Head of caudate nucleus (tissue), 42 donors: ENCODE measurements at regions of chr17 and their contacts with region 1.

Region 1: DNA sequence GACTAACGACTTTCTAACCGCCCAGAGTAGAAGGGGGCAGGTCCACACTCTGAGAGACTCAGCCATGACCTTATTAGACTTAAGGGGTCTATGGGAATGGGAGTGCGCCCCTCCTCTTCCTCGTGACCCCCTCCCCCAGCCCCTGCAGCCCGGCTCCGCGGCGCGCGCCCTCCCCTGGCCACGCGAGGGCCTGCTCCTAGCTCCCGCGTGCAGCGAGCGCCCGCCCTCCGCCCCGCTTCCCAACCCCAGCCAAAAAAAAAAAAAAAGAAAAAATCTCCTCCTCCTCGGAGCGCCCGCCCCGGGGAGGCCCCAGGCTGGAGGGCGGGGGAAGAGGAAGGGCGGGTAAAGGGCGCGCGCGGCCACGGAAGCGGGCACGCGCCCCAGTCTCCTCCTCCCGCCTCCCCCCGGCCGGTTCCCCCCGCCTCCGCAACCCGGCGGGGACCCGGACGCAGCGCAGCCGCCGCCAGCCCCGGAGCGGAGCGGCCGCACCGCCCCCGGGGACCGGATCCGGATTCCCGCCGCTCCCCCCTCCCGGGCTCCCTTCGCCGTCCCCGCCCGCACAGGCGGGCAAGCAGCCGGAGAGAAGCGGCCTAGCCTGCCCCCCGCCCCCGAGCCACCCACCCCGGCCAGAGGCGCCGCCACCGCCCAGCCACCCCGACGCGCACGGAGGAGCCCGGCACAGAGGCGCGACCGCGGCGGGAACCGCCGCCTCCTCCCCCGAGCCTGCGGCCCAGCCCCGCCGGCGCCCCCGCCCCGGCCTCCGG is 949 bp downstream of the UBTF start:
- DNase-seq: peak; percentile 57 to 95 (median 88)

Region 2: DNA sequence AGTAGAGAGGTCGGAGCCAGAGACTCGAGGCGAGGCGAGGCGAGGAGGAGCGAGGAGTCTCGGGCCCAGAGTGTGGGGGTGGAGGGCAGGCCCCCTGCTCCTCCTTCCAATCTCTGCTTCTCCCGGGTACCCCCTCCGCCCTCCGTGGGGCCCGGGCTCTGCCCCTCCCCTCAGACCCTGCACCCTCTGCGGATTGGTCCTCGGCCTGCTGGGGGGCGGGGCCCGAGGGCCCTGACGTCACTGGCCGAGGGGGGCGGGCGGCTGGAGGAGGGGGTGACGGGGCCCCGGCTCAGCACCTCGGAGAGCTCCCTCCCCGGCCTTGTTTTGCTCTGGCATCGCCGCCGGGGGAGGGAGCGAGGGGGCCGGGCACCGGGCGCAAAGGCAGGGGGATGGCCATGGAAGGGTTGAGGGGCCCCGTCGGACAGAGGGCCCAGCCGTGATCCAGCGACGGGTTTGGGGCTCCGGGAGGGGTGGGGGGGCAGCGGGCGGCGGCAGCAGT is 89.8 kb after region 1 on chr17 and contains the start of gene RUNDC3A:
- intact Hi-C with region 1: loop called (anchors 2 kb)
- DNase-seq: peak; percentile 85 to 98 (median 96)

Region 3: GRCh38 chr17:44326867-44327444 is 108.4 kb after region 1 on chr17:
- intact Hi-C with region 1: loop called (anchors 2 kb)
- DNase-seq: peak; percentile 96 to 100 (median 99)